Left ventricle myocardium inferior (tissue), 1 donor: ENCODE measurements at regions of chr16 and their contacts with region 1.

Region 1: GRCh38 chr16:72832621-72833248 is 215.2 kb downstream of the ZFHX3 start:
- DNase-seq: peak; percentile 83
- H3K4me3 ChIP-seq: no peak overlapping the region
- H3K27ac ChIP-seq: peak overlapping the region; percentile 46
- H3K4me1 ChIP-seq: peaks cover 19% of the 10 kb centered on the region
- H3K27me3 ChIP-seq: no peaks in the 10 kb centered on the region
- CTCF ChIP-seq: peak; percentile 97

Region 2: DNA sequence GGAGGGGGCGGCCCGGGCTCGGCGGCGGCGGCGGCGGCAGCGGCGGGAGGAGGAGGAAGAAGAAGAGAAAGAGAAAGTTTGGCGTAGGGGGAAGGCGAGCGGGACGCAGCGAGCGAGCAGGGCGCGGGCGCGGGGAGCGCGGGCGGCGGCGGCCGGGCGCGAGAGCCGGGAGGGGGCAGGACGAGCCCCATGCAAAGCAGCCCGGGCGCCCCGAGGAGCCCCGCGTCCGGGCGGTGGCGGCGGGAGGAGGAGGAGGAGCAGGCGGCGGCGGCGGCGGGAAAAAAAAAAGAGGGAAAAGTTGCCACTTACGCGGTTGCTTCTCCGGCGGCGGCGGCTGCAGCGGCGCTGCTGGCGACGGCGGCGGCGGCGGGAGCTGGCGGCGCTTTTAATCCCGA is 225.5 kb after region 1 on chr16:
- intact Hi-C with region 1: loop called (anchors 10 kb)
- DNase-seq: peak; percentile 61
- H3K4me3 ChIP-seq: peak overlapping the region; percentile 89
- H3K27ac ChIP-seq: peak overlapping the region; percentile 97
- H3K4me1 ChIP-seq: peaks cover 68% of the 10 kb centered on the region
- H3K27me3 ChIP-seq: peaks cover 13% of the 10 kb centered on the region
- CTCF ChIP-seq: peak; percentile 16

Region 3: DNA sequence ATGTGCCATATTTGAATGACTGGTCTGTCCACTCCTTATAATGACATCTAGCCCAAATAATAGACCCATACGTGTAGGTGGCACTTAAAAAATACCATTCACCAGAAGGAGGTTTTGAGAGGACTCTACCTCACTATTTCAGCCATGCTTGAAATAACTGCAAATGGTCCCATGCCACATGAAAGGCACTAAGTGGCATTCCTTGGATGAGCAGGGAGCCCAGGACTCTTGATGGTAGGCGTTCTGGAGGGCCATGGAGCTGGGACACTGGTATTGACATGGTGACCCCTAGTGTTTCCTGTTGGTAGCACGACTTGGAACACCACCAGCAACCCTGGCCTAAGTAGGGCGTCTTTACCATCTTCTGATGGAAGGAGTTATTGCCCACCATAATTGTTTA is 363.9 kb after region 1 on chr16:
- intact Hi-C with region 1: loop called (anchors 5 kb)
- DNase-seq: peak; percentile 61
- H3K4me3 ChIP-seq: no peak overlapping the region
- H3K27ac ChIP-seq: no peak overlapping the region
- H3K4me1 ChIP-seq: no peaks in the 10 kb centered on the region
- H3K27me3 ChIP-seq: peaks cover 33% of the 10 kb centered on the region
- CTCF ChIP-seq: peak; percentile 81